Activated naive CD4-positive, alpha-beta T cell treated with anti-CD3 and anti-CD28 coated beads, Interleukin-2, amount 10 ng/mL, durations not matched to agents 7 days and 5 days (primary cell): ENCODE measurements at regions of chr4 and their contacts with region 1.

Region 1: DNA sequence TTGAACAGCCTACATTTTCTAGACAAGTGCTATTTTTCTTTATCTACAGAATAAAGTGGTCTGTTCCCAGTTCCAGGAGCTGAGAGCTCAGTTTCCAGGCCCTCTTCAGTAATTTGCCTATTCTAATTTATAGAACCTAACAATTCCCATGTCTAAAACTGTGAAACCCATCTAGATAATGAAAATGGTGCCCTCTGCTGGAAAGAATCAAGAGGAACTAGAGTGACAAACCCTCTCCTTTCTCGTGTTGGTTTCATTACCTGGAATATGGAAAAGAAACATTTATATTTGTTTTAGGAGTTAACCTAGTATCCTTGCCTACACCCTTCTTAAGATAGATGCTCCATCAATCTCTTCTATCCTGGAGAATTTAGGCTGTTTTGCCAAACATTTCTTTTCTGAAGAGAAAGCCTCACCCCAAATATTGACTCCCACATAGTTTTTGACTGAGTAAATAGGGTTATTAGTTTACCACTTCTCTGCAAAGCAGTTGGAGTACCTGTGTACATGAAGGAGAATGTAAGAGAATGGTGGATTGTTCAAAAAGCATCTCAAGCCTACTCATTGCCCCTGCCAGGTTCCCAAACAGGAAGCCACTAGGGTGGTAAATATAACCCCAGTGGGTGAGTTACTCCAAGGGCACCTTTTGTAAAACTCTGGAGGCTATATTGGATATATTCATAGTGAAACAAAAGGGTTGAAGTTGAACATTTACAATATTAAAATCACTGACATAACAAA is 121.6 kb downstream of the RASL11B start:
- DNase-seq: no peak
- H3K4me3 Mint-ChIP-seq: no peak overlapping the region
- H3K27ac Mint-ChIP-seq: no peak overlapping the region
- H3K4me1 Mint-ChIP-seq: peaks cover 4% of the 10 kb centered on the region
- H3K27me3 Mint-ChIP-seq: no peaks in the 10 kb centered on the region

Region 2: GRCh38 chr4:52376132-52376704 is 607.5 kb before region 1 on chr4:
- CTCF ChIA-PET with region 1: interaction called, 16 read pairs
- DNase-seq: peak; percentile 24
- H3K4me3 Mint-ChIP-seq: no peak overlapping the region
- H3K27ac Mint-ChIP-seq: no peak overlapping the region
- H3K4me1 Mint-ChIP-seq: no peaks in the 10 kb centered on the region
- H3K27me3 Mint-ChIP-seq: no peaks in the 10 kb centered on the region

Region 3: DNA sequence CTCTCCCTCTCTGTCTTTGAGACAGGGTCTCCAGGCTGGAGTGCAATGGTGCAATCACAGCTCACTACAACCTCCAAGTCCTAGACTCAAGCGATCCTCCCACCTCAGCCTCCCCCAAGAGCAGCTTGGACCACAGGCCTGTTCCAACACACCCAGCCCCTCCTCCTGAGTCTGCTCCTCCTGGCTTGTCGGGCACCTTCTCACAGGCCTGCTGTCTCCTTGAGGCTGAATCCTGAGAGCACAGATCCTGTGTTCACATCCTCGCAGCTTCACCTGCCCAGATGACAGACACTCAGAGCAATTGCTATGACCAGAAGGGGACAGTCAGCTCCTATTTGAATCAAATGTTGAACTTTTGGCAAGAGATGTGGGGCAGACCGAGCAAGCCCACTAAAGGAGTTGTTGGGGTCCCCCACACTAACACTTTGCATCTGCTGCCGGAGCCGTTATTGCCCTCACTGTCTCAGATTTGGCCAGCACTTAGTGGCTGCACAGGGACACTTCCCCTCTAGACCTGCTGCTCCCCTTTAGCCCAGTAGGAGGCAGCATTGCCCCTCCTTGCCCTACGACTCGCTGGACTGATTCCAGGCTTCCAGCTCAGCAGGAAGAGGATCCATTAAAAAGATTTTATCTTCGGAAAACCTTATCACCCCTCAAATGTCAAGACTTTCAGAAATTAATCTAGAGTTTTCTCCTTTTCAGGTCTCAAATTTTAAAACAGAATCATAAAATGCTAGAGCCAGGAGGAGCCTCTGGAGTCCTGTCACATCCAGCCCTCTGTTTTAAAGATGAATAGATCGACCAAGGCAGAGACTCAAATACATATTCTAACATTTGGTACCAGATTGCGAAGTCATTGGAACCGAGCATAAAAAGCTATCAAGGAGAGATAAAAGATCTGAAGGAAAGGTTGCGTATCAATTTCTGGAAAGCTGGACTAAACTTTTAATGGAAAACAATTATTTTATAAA is 438.3 kb before region 1 on chr4:
- CTCF ChIA-PET with region 1: interaction called, 65 read pairs
- DNase-seq: peak; percentile 70
- H3K4me3 Mint-ChIP-seq: no peak overlapping the region
- H3K27ac Mint-ChIP-seq: no peak overlapping the region
- H3K4me1 Mint-ChIP-seq: no peaks in the 10 kb centered on the region
- H3K27me3 Mint-ChIP-seq: peaks cover 11% of the 10 kb centered on the region

Region 4: DNA sequence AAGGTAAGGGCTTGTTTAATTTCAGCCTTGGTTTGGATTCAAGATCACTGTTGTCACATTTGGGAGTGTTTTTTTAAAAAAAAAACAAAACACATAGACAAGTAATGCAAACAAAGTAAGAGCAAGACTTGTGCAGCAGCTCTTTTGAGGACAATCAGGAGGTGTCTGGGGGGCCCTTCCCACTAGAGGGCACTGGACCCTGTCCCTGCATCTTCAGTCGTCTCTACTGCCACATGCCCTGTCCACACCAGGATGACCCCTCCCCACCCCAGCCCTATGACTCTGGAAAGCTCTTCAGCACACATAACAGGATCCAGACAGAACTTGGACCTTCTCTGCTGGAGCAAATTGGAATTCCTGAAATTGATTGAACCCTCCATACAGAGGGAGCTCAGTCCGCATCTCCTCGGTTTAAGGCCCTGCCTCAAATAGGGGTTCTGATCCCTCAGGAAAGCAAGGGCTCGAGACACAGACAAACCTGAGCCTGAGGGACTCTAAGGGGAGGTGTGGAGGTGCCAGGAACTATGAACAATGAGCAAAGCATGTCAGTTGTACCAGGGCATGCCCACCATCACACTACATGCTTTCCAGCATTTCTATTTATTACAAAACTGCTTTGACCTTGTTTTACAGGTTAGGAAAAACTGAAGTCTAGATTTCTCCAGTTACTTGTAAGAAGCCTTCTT is 395.5 kb before region 1 on chr4:
- CTCF ChIA-PET with region 1: interaction called, 15 read pairs
- DNase-seq: peak; percentile 31
- H3K4me3 Mint-ChIP-seq: no peak overlapping the region
- H3K27ac Mint-ChIP-seq: peak overlapping the region; percentile 11
- H3K4me1 Mint-ChIP-seq: peaks cover 20% of the 10 kb centered on the region
- H3K27me3 Mint-ChIP-seq: peaks cover 6% of the 10 kb centered on the region

Region 5: GRCh38 chr4:53015681-53016080 is 31.9 kb after region 1 on chr4:
- CTCF ChIA-PET with region 1: no interaction called
- DNase-seq: peak; percentile 27
- H3K4me3 Mint-ChIP-seq: no peak overlapping the region
- H3K27ac Mint-ChIP-seq: no peak overlapping the region
- H3K4me1 Mint-ChIP-seq: peaks cover 33% of the 10 kb centered on the region
- H3K27me3 Mint-ChIP-seq: no peaks in the 10 kb centered on the region